AG04449 (cell line): ENCODE measurements at regions of chr11 and their contacts with region 1.

Region 1: GRCh38 chr11:78645226-78646202 is 70.8 kb upstream of the NARS2 start:
- DNase-seq: no peak
- H3K4me3 ChIP-seq: no peak overlapping the region
- CTCF ChIP-seq: peak; percentile 91

Region 2: DNA sequence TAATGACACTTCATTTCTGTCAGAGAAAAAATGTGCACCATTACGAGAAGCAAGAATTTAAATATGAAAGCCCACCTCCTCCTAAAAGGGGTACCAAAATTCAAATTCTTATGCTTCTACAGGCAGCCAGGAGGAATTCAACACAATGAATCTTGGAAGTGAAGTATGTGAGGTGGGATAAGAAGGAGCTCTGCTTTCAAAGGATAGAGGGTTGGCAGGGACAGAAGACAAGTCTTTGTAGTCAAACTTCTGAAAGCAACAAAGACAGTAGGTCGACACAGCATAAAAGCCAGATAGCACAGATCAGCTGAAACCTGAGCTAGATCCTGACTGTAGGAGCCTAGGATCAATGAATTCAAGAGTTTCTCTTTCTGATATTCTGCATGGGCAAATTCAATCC is 88.3 kb before region 1 on chr11:
- CTCF ChIA-PET with region 1: no interaction called
- POLR2A ChIA-PET with region 1: no interaction called
- DNase-seq: no peak
- H3K4me3 ChIP-seq: no peak overlapping the region
- CTCF ChIP-seq: no peak

Region 3: DNA sequence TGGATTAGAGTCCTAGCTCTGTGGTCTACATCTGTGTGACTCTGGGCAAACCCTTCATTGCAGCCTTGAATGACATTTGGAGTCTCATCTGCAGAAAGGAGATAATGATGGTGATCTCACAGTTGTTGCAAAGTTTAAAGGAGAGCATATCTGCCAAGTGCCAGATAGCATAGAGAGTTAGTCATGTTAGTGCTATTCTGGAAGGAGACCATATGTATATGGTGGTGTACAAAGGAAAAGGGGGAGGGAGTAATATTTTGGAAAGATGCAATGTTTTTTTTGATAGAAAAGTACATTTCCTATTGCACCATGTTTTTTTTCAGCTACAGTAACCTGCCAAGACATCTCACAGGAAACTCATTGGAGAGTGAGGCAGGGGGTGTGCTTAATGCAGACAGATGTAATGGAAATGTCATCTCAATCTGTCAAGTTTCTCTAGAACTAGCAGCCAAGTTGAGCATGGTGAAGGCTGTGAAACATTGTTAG is 21.2 kb after region 1 on chr11:
- CTCF ChIA-PET with region 1: interaction called, 173 read pairs
- POLR2A ChIA-PET with region 1: no interaction called
- DNase-seq: no peak
- H3K4me3 ChIP-seq: no peak overlapping the region
- CTCF ChIP-seq: no peak

Region 4: DNA sequence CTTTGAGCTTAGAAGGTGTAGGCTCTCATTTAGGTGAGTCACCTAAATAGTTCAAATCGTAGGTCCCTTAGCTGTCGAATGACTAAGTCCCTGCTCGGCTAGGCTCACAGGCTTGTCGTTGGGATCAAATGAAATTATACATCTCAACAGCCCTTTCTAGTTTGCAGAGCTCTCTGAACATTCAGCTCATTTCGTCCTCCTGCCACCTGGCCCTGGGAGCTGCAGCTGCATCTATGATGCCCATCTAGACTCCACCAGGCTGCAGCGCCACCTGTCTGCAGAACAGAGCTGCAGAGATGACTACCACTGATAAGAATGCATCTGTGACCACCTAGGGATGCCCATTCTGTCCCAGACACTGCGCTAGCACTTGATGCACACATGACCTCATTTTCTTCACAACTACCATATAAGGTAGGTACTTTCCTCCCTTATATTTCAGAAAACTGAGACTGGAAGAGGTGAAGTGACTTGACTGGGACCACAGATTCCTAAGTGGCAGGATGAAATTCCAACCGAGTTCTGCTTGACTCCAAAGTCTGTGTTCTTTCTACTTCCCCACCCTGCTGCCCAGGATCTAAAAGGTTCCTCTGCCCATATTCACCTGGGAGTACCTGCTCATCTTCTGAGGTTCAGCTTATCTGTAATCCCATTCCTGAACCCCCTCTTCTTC is 70.3 kb after region 1 on chr11:
- CTCF ChIA-PET with region 1: interaction called, 206 read pairs
- POLR2A ChIA-PET with region 1: interaction called, 3 read pairs
- DNase-seq: peak; percentile 23
- H3K4me3 ChIP-seq: no peak overlapping the region
- CTCF ChIP-seq: peak; percentile 74

Region 5: DNA sequence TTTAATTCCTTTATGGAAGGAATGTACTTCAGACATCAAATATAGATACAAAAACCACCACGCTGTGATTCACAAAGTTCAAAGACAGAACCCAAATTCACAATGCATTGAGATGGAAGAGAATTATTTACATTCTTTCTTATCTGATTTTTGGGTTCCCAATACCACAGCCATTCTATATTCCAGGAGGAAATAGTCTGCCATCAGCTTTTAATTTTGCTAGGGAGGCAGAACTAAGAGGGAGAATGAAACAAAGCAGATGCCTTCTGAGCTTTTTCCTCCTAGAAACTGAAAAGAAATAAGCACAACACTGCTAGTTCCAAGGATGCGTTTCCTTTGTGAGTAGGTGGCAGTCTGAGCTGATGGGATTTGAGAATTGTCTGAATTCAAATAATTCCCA is 212.2 kb after region 1 on chr11:
- CTCF ChIA-PET with region 1: interaction called, 22 read pairs
- POLR2A ChIA-PET with region 1: no interaction called
- DNase-seq: no peak
- H3K4me3 ChIP-seq: no peak overlapping the region
- CTCF ChIP-seq: no peak

Region 6: GRCh38 chr11:78981153-78981552 is 335.6 kb after region 1 on chr11:
- CTCF ChIA-PET with region 1: interaction called, 12 read pairs
- POLR2A ChIA-PET with region 1: no interaction called
- DNase-seq: no peak
- H3K4me3 ChIP-seq: no peak overlapping the region
- CTCF ChIP-seq: no peak

Region 7: GRCh38 chr11:79071190-79071589 is 425.7 kb after region 1 on chr11:
- CTCF ChIA-PET with region 1: interaction called, 24 read pairs
- POLR2A ChIA-PET with region 1: no interaction called
- DNase-seq: no peak
- H3K4me3 ChIP-seq: no peak overlapping the region
- CTCF ChIP-seq: no peak

Region 8: GRCh38 chr11:79440441-79441194 is 795.1 kb after region 1 on chr11 and contains the start of gene TENM4:
- CTCF ChIA-PET with region 1: interaction called, 22 read pairs
- POLR2A ChIA-PET with region 1: no interaction called
- DNase-seq: peak; percentile 40
- H3K4me3 ChIP-seq: peak within 1 kb of the TSS; percentile 70
- CTCF ChIP-seq: peak; percentile 21